Activated CD4-positive, alpha-beta T cell treated with anti-CD3 and anti-CD28 coated beads for 36 hours (primary cell): ENCODE measurements at regions of chr1 and their contacts with region 1.

Region 1: DNA sequence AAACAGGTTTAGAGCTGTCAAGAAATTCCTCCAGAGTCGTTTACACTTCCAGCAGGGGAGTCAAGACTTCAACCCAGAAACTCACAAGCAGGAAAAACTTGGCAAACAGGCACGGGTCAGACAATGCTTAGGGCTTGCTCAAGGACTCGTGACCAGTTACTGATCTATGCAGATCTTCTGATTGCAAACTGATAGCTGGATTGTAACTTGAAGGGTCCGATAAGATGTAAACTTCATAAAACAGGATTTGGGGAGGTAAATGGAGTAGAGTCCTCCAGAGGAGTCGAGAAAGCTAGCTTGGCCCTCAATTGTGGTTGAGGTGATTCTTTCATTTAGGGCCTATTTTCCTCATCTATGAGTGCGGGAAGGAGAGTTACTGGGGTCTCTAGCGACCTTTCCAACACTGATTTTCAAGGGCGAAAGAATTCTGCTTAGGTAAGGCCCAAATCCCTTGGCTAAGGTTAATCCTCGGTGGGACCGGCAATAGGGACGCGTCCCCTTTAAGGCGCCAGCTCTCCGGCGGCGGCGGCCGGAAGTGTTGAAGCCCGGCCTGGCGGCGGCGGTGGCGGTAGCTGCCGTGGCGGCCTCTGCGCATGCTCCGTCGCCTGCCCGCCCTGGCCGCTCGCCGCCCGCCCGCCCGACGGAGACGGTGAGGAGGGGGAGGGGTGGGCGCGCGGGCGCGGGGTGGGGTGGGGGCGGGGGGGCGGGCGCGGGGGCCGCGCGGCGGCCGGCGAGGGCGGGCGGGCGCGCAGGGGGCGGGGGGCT is at the start of gene GMEB1:
- DNase-seq: peak; percentile 93
- ATAC-seq: peak; percentile 72
- H3K4me3 Mint-ChIP-seq: peak within 1 kb of the TSS; percentile 84
- H3K27ac Mint-ChIP-seq: peak within 1 kb of the TSS; percentile 99
- H3K4me1 Mint-ChIP-seq: peaks cover 11% of the 10 kb centered on the region
- H3K27me3 Mint-ChIP-seq: no peaks in the 10 kb centered on the region
- total RNA-seq, gene GMEB1: 20.3 to 25.4 TPM

Region 2: GRCh38 chr1:28552758-28553663 is 115.4 kb before region 1 on chr1 and contains the start of gene TRNAU1AP:
- CTCF ChIA-PET with region 1: no interaction called
- POLR2A ChIA-PET with region 1: no interaction called
- intact Hi-C with region 1: loop called in 1 of 2 experiments (anchors 1 kb)
- DNase-seq: peak; percentile 99
- ATAC-seq: peak; percentile 94
- H3K4me3 Mint-ChIP-seq: peak within 1 kb of the TSS; percentile 92
- H3K27ac Mint-ChIP-seq: peak within 1 kb of the TSS; percentile 95
- H3K4me1 Mint-ChIP-seq: peaks cover 24% of the 10 kb centered on the region
- H3K27me3 Mint-ChIP-seq: no peaks in the 10 kb centered on the region
- total RNA-seq, gene TRNAU1AP: 50.7 to 60.2 TPM